Cardiac septum (tissue), 1 donor: ENCODE measurements at regions of chr13 and their contacts with region 1.

Region 1: GRCh38 chr13:53137779-53138178 is 109.2 kb downstream of the OLFM4 start:
- DNase-seq: no peak

Region 2: GRCh38 chr13:52968074-52968700 is 169.6 kb before region 1 on chr13:
- intact Hi-C with region 1: loop called (anchors 10 kb)
- DNase-seq: peak; percentile 87

Region 3: DNA sequence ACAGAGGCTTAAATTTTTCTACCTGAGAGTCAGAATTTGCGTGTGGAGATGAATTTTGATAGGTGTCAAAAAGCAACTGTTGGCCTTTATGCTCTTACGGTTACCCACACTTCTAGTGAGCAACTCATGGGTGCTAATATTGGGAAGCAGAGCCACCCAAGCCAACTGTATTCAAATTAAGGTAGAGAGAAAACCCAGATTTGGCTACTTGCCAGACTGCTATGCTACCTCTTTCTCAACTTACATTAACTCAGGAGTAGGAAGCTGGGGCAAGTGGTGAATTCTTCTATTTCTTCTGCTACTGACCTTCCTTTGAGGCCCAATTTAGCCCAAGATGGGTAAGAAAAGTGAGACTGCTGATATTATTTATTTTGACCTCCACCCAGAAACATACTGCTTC is 25.3 kb before region 1 on chr13:
- intact Hi-C with region 1: loop called (anchors 2 kb)
- DNase-seq: no peak

Region 4: DNA sequence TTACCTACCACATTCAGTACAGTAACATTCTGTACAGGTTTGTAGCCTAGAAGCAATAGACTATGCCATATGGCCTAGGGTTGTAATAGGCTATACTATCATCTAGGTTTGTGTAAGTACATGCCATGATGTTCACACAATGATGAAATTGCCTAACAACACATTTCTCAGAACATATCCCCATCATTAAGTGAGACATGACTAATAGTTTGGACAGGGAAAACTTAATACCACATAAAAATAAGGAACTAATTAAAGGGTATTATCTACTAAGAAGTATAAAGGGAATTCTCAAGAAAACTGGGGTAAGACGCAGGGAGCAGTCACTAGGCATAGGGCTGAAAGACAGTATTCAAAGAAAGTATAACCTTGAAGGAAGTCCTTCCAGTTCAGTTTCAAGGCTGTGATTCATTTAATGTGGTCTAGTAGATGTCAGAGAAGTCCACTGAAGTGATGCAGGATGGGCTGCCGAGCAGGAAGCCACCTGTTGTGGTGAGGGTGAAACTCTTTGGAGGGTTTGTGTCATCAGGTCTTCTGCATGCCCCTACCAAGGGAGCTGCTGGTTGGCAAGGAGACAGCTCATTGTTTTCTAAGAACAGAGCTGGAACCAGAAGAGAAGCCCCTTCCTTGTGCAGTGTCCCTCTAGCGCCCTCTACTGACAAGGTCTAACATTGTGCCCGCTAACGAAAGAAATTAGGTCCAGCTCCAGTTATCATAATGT is 13.7 kb after region 1 on chr13:
- intact Hi-C with region 1: no loop called
- DNase-seq: no peak